GM12878 (cell line): ENCODE measurements at regions of chr18 and their contacts with region 1.

Region 1: DNA sequence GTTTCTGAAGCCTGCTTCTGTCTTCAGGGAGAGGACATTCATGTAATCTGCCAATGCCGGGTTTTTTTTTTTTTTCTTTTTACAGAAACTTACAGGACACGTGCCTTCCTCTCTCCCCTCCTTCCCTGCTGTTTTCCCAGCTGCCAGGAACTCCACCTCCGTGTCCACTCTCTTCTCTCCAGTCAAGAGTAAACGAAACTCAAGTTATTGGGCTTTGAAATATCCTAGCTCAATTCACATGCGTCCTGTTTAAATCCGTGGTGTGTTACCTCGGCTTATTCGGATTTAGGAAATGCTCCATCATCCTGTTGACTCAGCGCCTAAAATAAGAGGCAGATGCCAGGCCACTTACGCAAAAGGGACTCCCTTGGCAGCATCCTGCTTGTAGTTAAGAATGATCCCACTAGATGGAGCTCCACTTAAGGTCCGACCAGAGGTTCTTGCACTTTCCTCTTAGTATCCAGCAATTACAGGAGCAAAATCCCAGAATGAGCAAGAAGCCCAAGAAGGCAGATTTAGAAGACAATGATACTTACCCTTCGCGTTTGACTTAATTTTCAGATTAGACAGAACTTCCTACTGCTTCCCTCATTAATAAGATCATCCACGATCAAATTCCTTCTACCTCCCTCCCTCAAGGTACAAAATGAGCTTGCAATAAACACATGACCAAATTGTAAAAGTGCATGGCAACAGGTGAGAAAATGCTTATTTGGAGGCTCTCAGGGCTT is 97.2 kb upstream of the ZCCHC2 start:
- DNase-seq: no peak
- ATAC-seq: peak; percentile 81
- H3K4me3 ChIP-seq: no peak overlapping the region
- H3K27ac ChIP-seq: no peak overlapping the region
- H3K4me1 ChIP-seq: peaks cover 3% of the 10 kb centered on the region
- H3K27me3 ChIP-seq: peaks cover 0 to 5% of the 10 kb centered on the region in 2 experiments; a peak in 1 of 4 replicates
- CTCF ChIP-seq: peak; percentile 78 to 82 (median 82)
- EP300 ChIP-seq: no peak
- POLR2A ChIP-seq: no peak
- RAD21 ChIP-seq: peak; percentile 87

Region 2: GRCh38 chr18:61893971-61894750 is 531.5 kb before region 1 on chr18:
- CTCF ChIA-PET with region 1: no interaction called
- POLR2A ChIA-PET with region 1: no interaction called
- RAD21 ChIA-PET with region 1: no interaction called
- SMC1A ChIA-PET with region 1: no interaction called
- in situ Hi-C with region 1: no loop called
- intact Hi-C with region 1: no loop called
- DNase-seq: no peak
- ATAC-seq: peak; percentile 83
- H3K4me3 ChIP-seq: peak overlapping the region; percentile 64; the same call in 1 of the 2 replicates
- H3K27ac ChIP-seq: no peak overlapping the region
- H3K4me1 ChIP-seq: no peaks in the 10 kb centered on the region; the same call in 1 of the 2 replicates
- H3K27me3 ChIP-seq: peaks cover 7 to 22% of the 10 kb centered on the region in 2 experiments
- CTCF ChIP-seq: peak in 2 of 3 experiments; percentile 31 to 40; a peak in 3 of 6 replicates
- EP300 ChIP-seq: no peak
- POLR2A ChIP-seq: no peak
- RAD21 ChIP-seq: peak; percentile 48

Region 3: DNA sequence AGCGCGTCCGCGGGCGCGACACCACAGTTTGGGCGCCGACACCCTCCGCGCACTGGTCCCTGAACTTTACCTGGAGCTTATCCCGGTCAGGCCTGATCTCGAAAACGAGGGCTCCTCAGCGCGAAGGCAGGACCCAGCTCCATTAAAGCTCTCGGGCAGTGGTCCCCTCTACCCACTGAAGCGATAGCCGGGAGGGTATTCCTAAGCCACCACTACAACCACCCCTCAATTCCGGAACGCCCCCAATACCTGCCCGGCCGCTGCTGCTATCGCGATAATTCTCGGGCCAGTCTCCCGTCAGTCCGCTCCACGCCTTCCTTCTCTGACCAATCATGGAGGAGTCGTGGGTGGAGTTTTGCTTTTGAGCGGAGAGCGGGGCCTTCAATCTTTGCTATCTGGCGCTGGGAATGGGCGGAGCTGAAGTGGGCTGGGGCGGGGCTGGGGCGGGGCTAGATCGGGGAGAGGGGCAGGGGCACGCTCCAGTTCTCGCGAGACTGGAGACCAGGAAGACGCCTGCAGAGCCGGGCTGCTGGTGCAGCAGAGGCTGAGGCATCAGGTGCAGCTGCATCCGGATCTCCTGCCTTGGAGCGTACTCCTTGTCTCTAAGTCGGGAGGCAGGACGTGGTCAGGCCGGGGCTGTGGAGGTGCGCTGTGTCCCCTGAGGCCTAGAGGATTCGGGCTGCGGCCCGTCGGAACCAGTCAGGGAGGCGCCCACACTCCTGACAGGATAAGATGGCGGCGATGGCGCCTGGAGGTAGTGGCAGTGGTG is 238.7 kb before region 1 on chr18 and contains the starts of genes PIGN and RELCH:
- CTCF ChIA-PET with region 1: interaction called, 10 read pairs
- POLR2A ChIA-PET with region 1: no interaction called
- RAD21 ChIA-PET with region 1: interaction called, 6 read pairs
- SMC1A ChIA-PET with region 1: interaction called, 6 read pairs
- in situ Hi-C with region 1: no loop called
- intact Hi-C with region 1: loop called (anchors 1 kb)
- DNase-seq: peak; percentile 92
- ATAC-seq: peak; percentile 90
- H3K4me3 ChIP-seq: peak within 1 kb of the TSS; percentile 99
- H3K27ac ChIP-seq: peak within 1 kb of the TSS; percentile 91
- H3K4me1 ChIP-seq: peaks cover 3% of the 10 kb centered on the region
- H3K27me3 ChIP-seq: no peaks in the 10 kb centered on the region
- CTCF ChIP-seq: no peak
- EP300 ChIP-seq: no peak
- POLR2A ChIP-seq: peak; percentile 98
- RAD21 ChIP-seq: no peak
- polyA plus RNA-seq, gene PIGN: 6.9 to 12.3 TPM
- polyA plus RNA-seq, gene RELCH: 3.1 to 3.4 TPM

Region 4: GRCh38 chr18:62413206-62413605 is 12.4 kb before region 1 on chr18:
- CTCF ChIA-PET with region 1: interaction called, 14 read pairs
- POLR2A ChIA-PET with region 1: no interaction called
- RAD21 ChIA-PET with region 1: interaction called, 3 read pairs
- SMC1A ChIA-PET with region 1: interaction called, 10 read pairs
- in situ Hi-C with region 1: no loop called
- intact Hi-C with region 1: no loop called
- DNase-seq: no peak
- ATAC-seq: no peak
- H3K4me3 ChIP-seq: no peak overlapping the region
- H3K27ac ChIP-seq: no peak overlapping the region
- H3K4me1 ChIP-seq: no peaks in the 10 kb centered on the region
- H3K27me3 ChIP-seq: no peaks in the 10 kb centered on the region
- CTCF ChIP-seq: no peak
- EP300 ChIP-seq: no peak
- POLR2A ChIP-seq: no peak
- RAD21 ChIP-seq: no peak

Region 5: DNA sequence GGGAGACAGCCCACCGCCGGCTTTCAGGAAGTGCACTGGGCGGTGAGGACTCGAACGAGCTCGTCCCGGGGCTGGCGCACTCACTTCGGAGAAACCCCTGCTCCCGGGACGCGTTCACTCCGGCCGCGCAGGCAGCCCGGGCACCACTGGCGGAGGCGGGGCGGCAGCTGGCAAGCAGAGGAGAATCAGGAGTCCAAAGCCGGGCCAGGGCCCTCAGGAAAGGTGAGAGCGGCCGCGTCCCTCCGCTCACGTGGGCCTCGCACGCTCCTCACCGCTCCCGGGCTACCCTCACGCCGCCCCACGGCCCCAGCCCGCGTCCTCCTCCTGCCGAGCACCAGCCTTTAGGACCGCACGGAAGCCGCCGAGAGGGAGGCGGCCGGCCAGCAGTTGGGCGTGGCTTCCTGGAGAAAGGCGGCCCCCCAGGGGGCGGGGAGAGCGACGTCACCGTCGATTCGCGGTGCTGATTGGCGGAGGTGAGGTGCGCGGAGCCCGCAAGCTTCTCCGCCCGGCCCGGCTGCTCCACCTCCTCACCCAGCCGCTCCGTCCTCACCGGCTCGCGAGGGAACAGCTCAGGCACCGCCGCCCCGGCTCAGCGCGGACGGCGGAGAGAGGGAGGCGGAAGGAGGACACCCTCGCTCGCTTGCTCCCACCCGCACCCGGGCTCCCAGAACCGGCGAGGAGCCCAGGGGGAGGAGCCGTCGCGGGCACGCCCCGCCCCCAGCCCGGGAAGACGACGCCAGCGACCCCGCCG is 97.0 kb after region 1 on chr18 and contains the start of gene ZCCHC2:
- CTCF ChIA-PET with region 1: interaction called, 8 read pairs
- POLR2A ChIA-PET with region 1: interaction called, 6 read pairs
- RAD21 ChIA-PET with region 1: interaction called, 4 read pairs
- SMC1A ChIA-PET with region 1: interaction called, 6 read pairs
- in situ Hi-C with region 1: no loop called
- intact Hi-C with region 1: loop called (anchors 2 kb)
- DNase-seq: peak; percentile 90
- ATAC-seq: peak; percentile 75
- H3K4me3 ChIP-seq: peak within 1 kb of the TSS; percentile 74
- H3K27ac ChIP-seq: peak within 1 kb of the TSS; percentile 66
- H3K4me1 ChIP-seq: no peaks in the 10 kb centered on the region
- H3K27me3 ChIP-seq: peaks cover 0 to 3% of the 10 kb centered on the region in 2 experiments; a peak in 2 of 4 replicates
- CTCF ChIP-seq: no peak
- EP300 ChIP-seq: no peak
- POLR2A ChIP-seq: peak; percentile 90
- RAD21 ChIP-seq: no peak
- polyA plus RNA-seq, gene ZCCHC2: 1.7 to 2.7 TPM

Region 6: DNA sequence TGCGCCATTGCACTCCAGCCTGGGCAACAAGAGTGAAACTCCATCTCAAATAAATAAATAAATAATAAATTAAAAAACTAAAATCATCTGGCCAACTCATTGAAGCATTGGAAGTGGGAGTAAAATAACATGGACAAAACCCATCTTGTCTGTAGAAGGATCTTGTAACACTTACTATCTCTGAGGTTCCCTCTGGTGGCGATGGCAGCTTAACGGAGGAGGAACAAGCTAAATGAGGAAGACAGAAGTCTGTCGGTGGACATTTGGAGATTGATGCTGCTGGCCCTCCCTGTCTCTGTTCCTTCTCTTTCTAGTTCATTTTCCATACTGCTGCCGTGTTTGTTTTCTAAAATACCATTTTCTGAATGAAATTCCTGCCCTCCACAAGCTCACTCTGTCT is 140.6 kb after region 1 on chr18:
- CTCF ChIA-PET with region 1: interaction called, 21 read pairs
- POLR2A ChIA-PET with region 1: no interaction called
- RAD21 ChIA-PET with region 1: interaction called, 3 read pairs
- SMC1A ChIA-PET with region 1: interaction called, 4 read pairs
- in situ Hi-C with region 1: no loop called
- intact Hi-C with region 1: no loop called
- DNase-seq: no peak
- ATAC-seq: no peak
- H3K4me3 ChIP-seq: no peak overlapping the region
- H3K27ac ChIP-seq: no peak overlapping the region
- H3K4me1 ChIP-seq: no peaks in the 10 kb centered on the region
- H3K27me3 ChIP-seq: no peaks in the 10 kb centered on the region
- CTCF ChIP-seq: peak in 2 of 3 experiments; percentile 5 to 20; a peak in 2 of 6 replicates
- EP300 ChIP-seq: no peak
- POLR2A ChIP-seq: no peak
- RAD21 ChIP-seq: no peak

Region 7: GRCh38 chr18:62576845-62577512 is 151.3 kb after region 1 on chr18:
- CTCF ChIA-PET with region 1: interaction called, 14 read pairs
- POLR2A ChIA-PET with region 1: no interaction called
- RAD21 ChIA-PET with region 1: interaction called, 9 read pairs
- SMC1A ChIA-PET with region 1: interaction called, 7 read pairs
- in situ Hi-C with region 1: no loop called
- intact Hi-C with region 1: no loop called
- DNase-seq: no peak
- ATAC-seq: peak; percentile 56
- H3K4me3 ChIP-seq: no peak overlapping the region
- H3K27ac ChIP-seq: peak overlapping the region; percentile 42
- H3K4me1 ChIP-seq: peaks cover 7% of the 10 kb centered on the region
- H3K27me3 ChIP-seq: no peaks in the 10 kb centered on the region
- CTCF ChIP-seq: no peak
- EP300 ChIP-seq: no peak
- POLR2A ChIP-seq: no peak
- RAD21 ChIP-seq: no peak

Region 8: DNA sequence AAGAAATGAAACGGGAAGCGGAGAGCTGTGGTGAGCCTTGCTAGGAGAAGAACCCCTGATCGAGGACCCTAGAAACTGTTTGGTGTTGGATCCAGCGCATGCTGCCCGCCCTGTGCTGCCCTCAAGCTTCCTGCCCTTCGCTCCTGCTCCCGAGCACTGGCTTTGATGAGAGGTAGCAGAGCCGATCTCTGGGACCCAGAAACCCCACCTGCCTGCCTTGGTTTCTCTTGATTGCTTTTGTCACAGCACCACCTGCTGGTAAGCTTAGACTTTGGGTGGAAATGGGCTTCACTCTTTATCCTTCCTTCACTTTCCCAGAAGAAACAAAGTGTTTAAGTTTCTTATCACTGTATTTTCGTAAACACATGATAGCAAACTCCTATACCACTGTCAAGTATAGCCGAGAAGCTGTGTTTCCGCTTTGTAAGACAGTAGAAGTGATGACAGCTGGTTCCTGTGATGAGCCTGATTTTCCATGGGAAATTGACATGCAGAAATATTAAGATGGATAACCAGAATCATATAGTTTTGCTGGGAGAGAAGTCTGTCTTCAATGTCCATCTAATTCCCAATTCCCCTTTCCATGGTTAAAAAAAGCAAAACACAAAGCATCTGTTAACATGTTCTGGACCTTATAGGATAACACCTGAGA is 557.1 kb after region 1 on chr18:
- CTCF ChIA-PET with region 1: interaction called, 4 read pairs
- POLR2A ChIA-PET with region 1: no interaction called
- RAD21 ChIA-PET with region 1: no interaction called
- SMC1A ChIA-PET with region 1: interaction called, 5 read pairs
- in situ Hi-C with region 1: no loop called
- intact Hi-C with region 1: loop called (anchors 5 kb)
- DNase-seq: peak; percentile 7
- ATAC-seq: peak; percentile 88
- H3K4me3 ChIP-seq: no peak overlapping the region
- H3K27ac ChIP-seq: no peak overlapping the region
- H3K4me1 ChIP-seq: no peaks in the 10 kb centered on the region
- H3K27me3 ChIP-seq: no peaks in the 10 kb centered on the region
- CTCF ChIP-seq: peak; percentile 75 to 82 (median 78)
- EP300 ChIP-seq: no peak
- POLR2A ChIP-seq: no peak
- RAD21 ChIP-seq: peak; percentile 98